ENCODE measurements at regions of chr3 and their contacts with region 1.

Region 1: DNA sequence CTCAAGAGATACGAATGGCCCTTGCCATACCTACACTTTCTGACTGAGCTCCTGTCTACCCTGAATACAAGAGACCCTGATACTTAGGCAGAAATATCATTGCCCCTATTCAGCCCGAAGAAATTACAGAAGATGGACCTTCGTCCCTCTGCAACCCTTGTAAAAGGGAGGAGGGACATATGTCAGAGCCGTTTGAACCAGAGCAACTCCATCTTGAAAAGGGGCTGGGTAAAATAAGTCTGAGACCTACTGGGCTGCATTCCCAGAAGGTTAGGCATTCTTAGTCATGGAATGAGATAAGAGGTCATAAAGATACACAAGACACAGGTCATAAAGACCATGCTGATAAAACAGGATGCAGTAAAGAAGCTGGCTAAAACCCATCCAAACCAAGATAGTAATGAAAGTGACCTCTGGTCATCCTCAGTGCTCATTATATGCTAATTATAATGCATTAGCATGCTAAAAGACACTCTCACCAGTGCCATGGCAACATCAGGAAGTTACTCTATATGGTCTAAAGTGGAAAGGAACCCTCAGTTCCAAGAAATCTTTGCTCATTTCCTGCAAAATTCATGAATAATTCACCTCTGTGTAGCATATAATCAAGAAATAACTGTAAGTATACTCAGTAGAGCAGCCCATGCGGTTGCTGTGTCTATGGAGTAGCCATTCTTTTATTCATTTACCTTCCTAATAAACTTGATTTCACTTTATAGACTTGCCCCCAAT is 49.7 kb upstream of the GPD1L start:
- DNase-seq: no peak
- H3K4me3 ChIP-seq: no peak overlapping the region
- H3K27ac ChIP-seq: no peak overlapping the region
- H3K4me1 ChIP-seq: peaks cover 3% of the 10 kb centered on the region
- H3K27me3 ChIP-seq: no peaks in the 10 kb centered on the region
- CTCF ChIP-seq: no peak

Region 2: GRCh38 chr3:31743331-31744089 is 313.2 kb before region 1 on chr3:
- CTCF ChIA-PET with region 1: no interaction called
- POLR2A ChIA-PET with region 1: interaction called, 11 read pairs
- intact Hi-C with region 1: no loop called
- DNase-seq: no peak
- H3K4me3 ChIP-seq: no peak overlapping the region
- H3K27ac ChIP-seq: no peak overlapping the region
- H3K4me1 ChIP-seq: no peaks in the 10 kb centered on the region
- H3K27me3 ChIP-seq: no peaks in the 10 kb centered on the region
- CTCF ChIP-seq: no peak

Region 3: GRCh38 chr3:32310918-32311839 is 254.5 kb after region 1 on chr3:
- CTCF ChIA-PET with region 1: no interaction called
- POLR2A ChIA-PET with region 1: no interaction called
- intact Hi-C with region 1: no loop called
- DNase-seq: no peak
- H3K4me3 ChIP-seq: no peak overlapping the region
- H3K27ac ChIP-seq: no peak overlapping the region
- H3K4me1 ChIP-seq: peaks cover 15% of the 10 kb centered on the region; the same call in 1 of the 2 replicates
- H3K27me3 ChIP-seq: no peaks in the 10 kb centered on the region
- CTCF ChIP-seq: no peak

Measured in PC-9 (cell line).